ENCODE measurements at regions of chr2 and their contacts with region 1.

Region 1: GRCh38 chr2:96174251-96175144 is 29.3 kb upstream of the DUSP2 start:
- DNase-seq: peak; percentile 70 to 90 (median 84)
- ATAC-seq: peak; percentile 100
- H3K4me3 ChIP-seq: no peak overlapping the region
- H3K4me3 Mint-ChIP-seq: no peak overlapping the region
- H3K27ac ChIP-seq: no peak overlapping the region
- H3K27ac Mint-ChIP-seq: peak overlapping the region; percentile 72
- H3K4me1 ChIP-seq: peaks cover 7% of the 10 kb centered on the region
- H3K4me1 Mint-ChIP-seq: peaks cover 14% of the 10 kb centered on the region
- H3K27me3 ChIP-seq: no peaks in the 10 kb centered on the region
- H3K27me3 Mint-ChIP-seq: no peaks in the 10 kb centered on the region
- CTCF ChIP-seq: peak; percentile 96

Region 2: GRCh38 chr2:96024336-96025193 is 149.9 kb before region 1 on chr2:
- CTCF ChIA-PET with region 1: interaction called, 19 read pairs
- POLR2A ChIA-PET with region 1: no interaction called
- intact Hi-C with region 1: loop called in 1 of 2 experiments (anchors 10 kb)
- DNase-seq: peak in 1 of 9 experiments; percentile 3
- ATAC-seq: no peak
- H3K4me3 ChIP-seq: no peak overlapping the region
- H3K4me3 Mint-ChIP-seq: no peak overlapping the region
- H3K27ac ChIP-seq: no peak overlapping the region
- H3K27ac Mint-ChIP-seq: no peak overlapping the region
- H3K4me1 ChIP-seq: no peaks in the 10 kb centered on the region
- H3K4me1 Mint-ChIP-seq: peaks cover 2% of the 10 kb centered on the region
- H3K27me3 ChIP-seq: no peaks in the 10 kb centered on the region
- H3K27me3 Mint-ChIP-seq: no peaks in the 10 kb centered on the region
- CTCF ChIP-seq: no peak

Region 3: DNA sequence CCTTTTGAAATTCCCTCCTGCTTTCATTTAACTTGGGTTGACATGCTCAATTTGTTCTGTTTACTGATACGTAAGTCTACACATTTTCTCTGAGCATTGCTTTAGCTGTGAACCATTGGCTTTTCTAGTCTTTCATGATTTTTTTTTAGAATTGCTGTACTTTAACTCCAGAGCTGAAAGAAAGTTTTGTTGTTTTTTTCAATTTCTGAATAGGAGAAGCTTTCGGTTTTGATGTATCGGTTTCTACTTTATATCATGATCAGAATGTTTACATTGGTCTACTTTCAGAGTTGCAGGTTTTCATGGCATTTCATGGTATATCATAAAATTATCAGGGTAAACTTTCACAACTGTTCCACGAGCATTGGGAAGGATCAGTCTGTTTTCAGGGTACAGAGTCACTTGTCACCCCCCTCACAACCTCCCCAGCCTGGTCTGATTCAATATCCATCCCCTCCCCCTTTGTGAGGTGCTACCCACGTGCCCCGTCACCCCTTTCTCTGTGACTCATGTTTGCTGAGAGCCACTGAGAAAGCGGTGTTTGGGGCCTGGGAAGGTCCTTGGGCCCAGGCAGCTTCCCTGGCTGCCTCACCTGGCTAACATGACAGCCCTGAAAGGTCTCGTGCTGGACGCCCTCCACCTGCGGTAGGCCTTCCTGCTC is 43.2 kb before region 1 on chr2:
- CTCF ChIA-PET with region 1: interaction called, 775 read pairs
- POLR2A ChIA-PET with region 1: interaction called, 61 read pairs
- intact Hi-C with region 1: no loop called
- DNase-seq: peak in 3 of 9 experiments; percentile 38 to 73 (median 55)
- ATAC-seq: peak; percentile 39
- H3K4me3 ChIP-seq: no peak overlapping the region
- H3K4me3 Mint-ChIP-seq: no peak overlapping the region
- H3K27ac ChIP-seq: peak overlapping the region in 1 of 2 experiments; percentile 71
- H3K27ac Mint-ChIP-seq: peak overlapping the region; percentile 29
- H3K4me1 ChIP-seq: no peaks in the 10 kb centered on the region
- H3K4me1 Mint-ChIP-seq: peaks cover 15% of the 10 kb centered on the region
- H3K27me3 ChIP-seq: no peaks in the 10 kb centered on the region
- H3K27me3 Mint-ChIP-seq: no peaks in the 10 kb centered on the region
- CTCF ChIP-seq: no peak

Region 4: GRCh38 chr2:96145036-96145847 is 29.3 kb before region 1 on chr2 and contains the start of gene DUSP2:
- CTCF ChIA-PET with region 1: interaction called, 775 read pairs
- POLR2A ChIA-PET with region 1: interaction called, 68 read pairs
- intact Hi-C with region 1: no loop called
- DNase-seq: peak; percentile 80 to 97 (median 91)
- ATAC-seq: peak; percentile 37
- H3K4me3 ChIP-seq: peak within 1 kb of the TSS; percentile 91 to 96
- H3K4me3 Mint-ChIP-seq: peak within 1 kb of the TSS; percentile 94
- H3K27ac ChIP-seq: peak within 1 kb of the TSS; percentile 98 to 99
- H3K27ac Mint-ChIP-seq: peak within 1 kb of the TSS; percentile 94
- H3K4me1 ChIP-seq: peaks cover 61% of the 10 kb centered on the region
- H3K4me1 Mint-ChIP-seq: peaks cover 57% of the 10 kb centered on the region
- H3K27me3 ChIP-seq: no peaks in the 10 kb centered on the region
- H3K27me3 Mint-ChIP-seq: no peaks in the 10 kb centered on the region
- CTCF ChIP-seq: no peak
- total RNA-seq, gene DUSP2: 1,304 to 1,350 TPM

Region 5: DNA sequence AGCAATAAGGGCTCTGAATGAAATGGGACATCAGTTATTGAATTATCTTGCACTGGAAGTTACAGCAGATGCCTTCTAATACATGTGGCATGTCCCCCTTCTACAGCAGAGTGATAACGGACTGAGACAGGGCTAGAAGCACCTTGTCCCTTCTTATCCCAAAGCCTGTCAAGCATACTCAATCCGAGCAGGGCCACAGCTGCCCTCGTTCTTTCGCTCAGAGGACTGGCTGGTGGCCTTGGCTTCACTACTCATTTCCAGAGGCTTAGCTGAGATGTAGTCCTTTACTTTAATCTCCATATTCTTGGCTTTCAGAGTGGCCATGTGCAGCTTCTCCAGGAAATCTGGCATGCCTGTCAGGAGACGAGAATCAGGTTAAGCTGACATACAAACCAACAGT is 12.1 kb after region 1 on chr2:
- CTCF ChIA-PET with region 1: interaction called, 27 read pairs
- POLR2A ChIA-PET with region 1: no interaction called
- intact Hi-C with region 1: no loop called
- DNase-seq: no peak
- ATAC-seq: no peak
- H3K4me3 ChIP-seq: no peak overlapping the region
- H3K4me3 Mint-ChIP-seq: no peak overlapping the region
- H3K27ac ChIP-seq: no peak overlapping the region
- H3K27ac Mint-ChIP-seq: no peak overlapping the region
- H3K4me1 ChIP-seq: no peaks in the 10 kb centered on the region
- H3K4me1 Mint-ChIP-seq: peaks cover under 1% of the 10 kb centered on the region
- H3K27me3 ChIP-seq: no peaks in the 10 kb centered on the region
- H3K27me3 Mint-ChIP-seq: no peaks in the 10 kb centered on the region
- CTCF ChIP-seq: no peak

Region 6: DNA sequence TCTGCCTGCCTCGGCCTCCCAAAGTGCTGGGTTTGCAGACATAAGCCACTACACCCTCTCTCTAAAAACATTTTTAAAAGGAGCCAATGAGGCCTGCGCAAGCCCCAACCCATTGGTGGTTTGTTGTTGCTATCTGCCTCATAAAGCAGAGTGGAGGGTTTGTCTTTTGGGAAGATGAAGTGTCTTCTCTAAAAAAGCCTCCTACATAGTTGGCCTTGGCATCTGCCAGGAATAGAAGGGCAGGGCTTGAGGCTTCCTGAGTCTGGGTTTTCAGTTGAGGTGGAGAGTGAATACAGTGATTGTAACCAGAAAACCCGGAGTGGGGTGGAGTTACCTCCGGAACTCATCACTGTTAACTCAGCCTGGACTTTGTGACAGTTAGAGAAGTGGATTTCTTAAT is 40.1 kb after region 1 on chr2:
- CTCF ChIA-PET with region 1: no interaction called
- POLR2A ChIA-PET with region 1: no interaction called
- intact Hi-C with region 1: no loop called
- DNase-seq: no peak
- ATAC-seq: no peak
- H3K4me3 ChIP-seq: no peak overlapping the region
- H3K4me3 Mint-ChIP-seq: no peak overlapping the region
- H3K27ac ChIP-seq: no peak overlapping the region
- H3K27ac Mint-ChIP-seq: no peak overlapping the region
- H3K4me1 ChIP-seq: peaks cover 7% of the 10 kb centered on the region
- H3K4me1 Mint-ChIP-seq: peaks cover 6% of the 10 kb centered on the region
- H3K27me3 ChIP-seq: no peaks in the 10 kb centered on the region
- H3K27me3 Mint-ChIP-seq: no peaks in the 10 kb centered on the region
- CTCF ChIP-seq: no peak

Measured in CD8-positive, alpha-beta T cell (primary cell).